SK-N-SH (cell line): ENCODE measurements at regions of chr17 and their contacts with region 1.

Region 1: GRCh38 chr17:45135192-45135977 is at the start of gene ACBD4:
- DNase-seq: peak; percentile 96
- H3K4me3 ChIP-seq: peak within 1 kb of the TSS; percentile 81 to 85
- H3K27ac ChIP-seq: peak within 1 kb of the TSS in 1 of 2 experiments; percentile 60; a peak in 1 of 4 replicates
- H3K4me1 ChIP-seq: peaks cover 0 to 25% of the 10 kb centered on the region in 2 experiments; a peak in 1 of 4 replicates
- H3K27me3 ChIP-seq: no peaks in the 10 kb centered on the region
- CTCF ChIP-seq: peak; percentile 100
- EP300 ChIP-seq: no peak
- RAD21 ChIP-seq: peak; percentile 95
- polyA plus RNA-seq, gene ACBD4: 15.8 and 18.1 TPM in 2 replicates

Region 2: DNA sequence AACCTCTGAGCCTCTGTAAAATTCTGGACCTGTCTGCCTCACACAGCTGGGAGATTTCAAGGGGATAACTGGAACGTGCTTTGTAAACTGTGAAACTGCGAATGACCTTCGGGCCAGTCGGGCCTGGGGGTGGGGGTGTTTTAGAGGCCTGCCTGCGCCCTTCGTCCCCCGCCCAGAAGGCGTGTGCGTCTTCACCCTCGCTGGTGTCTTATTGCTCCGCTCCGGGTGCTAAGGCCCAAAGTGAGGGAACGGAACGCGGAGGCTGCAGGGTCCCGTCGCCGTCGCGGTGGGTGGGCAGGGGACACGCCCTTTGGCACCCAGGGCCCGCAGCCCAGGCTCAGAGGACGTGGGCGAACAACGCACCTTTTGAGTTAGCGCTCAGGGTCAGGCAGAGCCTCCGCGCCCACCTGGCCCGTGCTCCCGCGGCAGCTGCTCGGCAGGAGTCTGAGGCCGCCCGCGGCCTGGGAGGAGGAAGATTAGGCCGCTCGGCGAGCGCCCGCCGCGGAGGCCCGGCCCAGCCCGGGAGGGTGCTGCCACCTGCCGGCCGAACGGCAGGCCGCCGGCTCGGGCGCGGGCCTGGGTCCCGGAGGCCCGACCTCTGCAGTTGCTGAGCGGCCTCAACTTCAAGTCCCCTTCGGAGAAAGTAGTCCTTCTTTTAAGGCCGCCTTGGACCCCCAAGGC is 113.6 kb before region 1 on chr17:
- CTCF ChIA-PET with region 1: interaction called, 11 read pairs
- POLR2A ChIA-PET with region 1: no interaction called
- DNase-seq: peak; percentile 96
- H3K4me3 ChIP-seq: peak overlapping the region in 1 of 2 experiments; percentile 19; a peak in 1 of 4 replicates
- H3K27ac ChIP-seq: peak overlapping the region in 1 of 2 experiments; percentile 77; a peak in 2 of 4 replicates
- H3K4me1 ChIP-seq: peaks cover 10 to 34% of the 10 kb centered on the region in 2 experiments; a peak in 1 of 4 replicates
- H3K27me3 ChIP-seq: no peaks in the 10 kb centered on the region
- CTCF ChIP-seq: peak; percentile 88
- EP300 ChIP-seq: no peak
- RAD21 ChIP-seq: peak; percentile 77

Region 3: GRCh38 chr17:45110668-45111611 is 24.4 kb before region 1 on chr17:
- CTCF ChIA-PET with region 1: interaction called, 169 read pairs
- POLR2A ChIA-PET with region 1: no interaction called
- DNase-seq: peak; percentile 36
- H3K4me3 ChIP-seq: no peak overlapping the region
- H3K27ac ChIP-seq: no peak overlapping the region
- H3K4me1 ChIP-seq: peaks cover 0 to 13% of the 10 kb centered on the region in 2 experiments; a peak in 1 of 4 replicates
- H3K27me3 ChIP-seq: no peaks in the 10 kb centered on the region
- CTCF ChIP-seq: no peak
- EP300 ChIP-seq: no peak
- RAD21 ChIP-seq: no peak

Region 4: GRCh38 chr17:45148183-45149036 is 13.0 kb after region 1 on chr17 and contains the start of gene HEXIM1:
- CTCF ChIA-PET with region 1: interaction called, 209 read pairs
- POLR2A ChIA-PET with region 1: interaction called, 47 read pairs
- DNase-seq: peak; percentile 94
- H3K4me3 ChIP-seq: peak within 1 kb of the TSS; percentile 85 to 99
- H3K27ac ChIP-seq: peak within 1 kb of the TSS; percentile 99 to 100
- H3K4me1 ChIP-seq: peaks cover 17 to 25% of the 10 kb centered on the region in 2 experiments; a peak in 3 of 4 replicates
- H3K27me3 ChIP-seq: no peaks in the 10 kb centered on the region
- CTCF ChIP-seq: no peak
- EP300 ChIP-seq: no peak; a peak in 1 of 4 replicates
- RAD21 ChIP-seq: no peak
- polyA plus RNA-seq, gene HEXIM1: 16.1 and 20.7 TPM in 2 replicates

Region 5: GRCh38 chr17:45184144-45184543 is 48.8 kb after region 1 on chr17:
- CTCF ChIA-PET with region 1: interaction called, 15 read pairs
- POLR2A ChIA-PET with region 1: no interaction called
- DNase-seq: no peak
- H3K4me3 ChIP-seq: no peak overlapping the region
- H3K27ac ChIP-seq: no peak overlapping the region
- H3K4me1 ChIP-seq: no peaks in the 10 kb centered on the region
- H3K27me3 ChIP-seq: no peaks in the 10 kb centered on the region
- CTCF ChIP-seq: no peak
- EP300 ChIP-seq: no peak
- RAD21 ChIP-seq: no peak

Region 6: GRCh38 chr17:45228763-45229539 is 93.6 kb after region 1 on chr17:
- CTCF ChIA-PET with region 1: interaction called, 27 read pairs
- POLR2A ChIA-PET with region 1: no interaction called
- DNase-seq: no peak
- H3K4me3 ChIP-seq: no peak overlapping the region
- H3K27ac ChIP-seq: no peak overlapping the region
- H3K4me1 ChIP-seq: peaks cover 4 to 23% of the 10 kb centered on the region in 2 experiments; a peak in 2 of 4 replicates
- H3K27me3 ChIP-seq: no peaks in the 10 kb centered on the region
- CTCF ChIP-seq: no peak
- EP300 ChIP-seq: no peak
- RAD21 ChIP-seq: no peak